ENCODE measurements at regions of chr22 and their contacts with region 1.

Region 1: GRCh38 chr22:42680648-42681047 is 31.5 kb upstream of the CYB5R3 start:
- DNase-seq: no peak
- ATAC-seq: peak in 3 of 8 donors; percentile 10 to 78 (median 40)
- H3K4me3 ChIP-seq: no peak overlapping the region
- H3K27ac ChIP-seq: peak overlapping the region in 6 of 10 donors; percentile 15 to 92 (median 52)
- H3K4me1 ChIP-seq: peaks cover 47 to 98% (median 91%) of the 10 kb centered on the region in 9 donors
- H3K27me3 ChIP-seq: no peaks in the 10 kb centered on the region
- CTCF ChIP-seq: no peak

Region 2: DNA sequence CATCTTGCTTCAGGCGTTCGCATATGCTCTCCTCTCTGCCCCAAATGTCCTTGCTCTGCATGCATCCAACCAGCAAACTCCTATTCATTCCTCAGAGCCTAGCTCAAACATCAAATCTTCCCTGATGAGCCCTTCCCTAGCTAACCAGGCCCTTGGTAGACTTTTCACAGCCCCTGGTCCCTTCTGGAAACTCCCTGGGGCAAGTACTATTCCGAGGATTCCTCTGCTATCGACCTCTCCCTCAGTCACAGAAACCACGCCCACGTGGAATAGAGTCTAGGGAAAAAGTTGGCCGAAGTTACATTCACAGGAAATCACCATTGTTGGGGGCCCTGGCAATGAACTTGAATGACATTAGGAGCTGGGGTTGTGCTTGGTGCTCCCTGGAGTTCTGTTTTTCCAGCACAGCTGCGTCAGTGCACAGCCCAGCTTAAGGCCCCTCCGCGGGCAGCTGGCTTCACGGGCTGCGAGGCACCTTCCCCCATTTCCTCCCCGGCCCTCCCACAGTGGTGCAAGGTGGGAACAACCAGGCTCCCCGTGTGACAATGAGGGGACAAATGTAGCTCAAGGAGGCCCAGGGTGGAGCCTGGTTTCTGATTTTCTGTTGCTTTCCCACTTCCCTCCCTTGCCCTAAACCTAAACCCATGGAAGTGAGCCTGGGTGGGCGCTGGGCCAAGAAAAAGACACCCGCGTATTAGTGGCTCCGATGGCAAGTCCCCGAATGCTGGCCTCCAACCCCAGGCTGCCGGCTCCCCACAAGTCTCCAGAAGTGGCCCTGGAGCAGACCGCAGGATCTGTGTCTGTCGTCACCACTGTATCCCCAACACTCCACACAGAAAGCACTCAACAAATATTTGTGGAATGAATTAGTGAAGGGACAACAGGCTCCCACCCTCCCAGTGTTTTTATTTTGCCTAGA is 36.0 kb before region 1 on chr22:
- intact Hi-C with region 1: no loop called
- DNase-seq: peak; percentile 69 to 80
- ATAC-seq: peak in 6 of 8 donors; percentile 9 to 52 (median 29)
- H3K4me3 ChIP-seq: peak overlapping the region in 9 of 10 donors; percentile 33 to 99 (median 50)
- H3K27ac ChIP-seq: peak overlapping the region; percentile 77 to 99 (median 96)
- H3K4me1 ChIP-seq: peaks cover 49 to 87% (median 80%) of the 10 kb centered on the region in 9 donors
- H3K27me3 ChIP-seq: no peaks in the 10 kb centered on the region
- CTCF ChIP-seq: no peak

Region 3: GRCh38 chr22:42743501-42743991 is 62.9 kb after region 1 on chr22:
- intact Hi-C with region 1: loop called in 1 of 10 experiments (anchors 5 kb)
- DNase-seq: peak; percentile 91 to 93
- ATAC-seq: peak; percentile 89 to 94 (median 92)
- H3K4me3 ChIP-seq: peak overlapping the region in 1 of 10 donors; percentile 10
- H3K27ac ChIP-seq: peak overlapping the region; percentile 67 to 96 (median 82)
- H3K4me1 ChIP-seq: peaks cover 13 to 49% (median 31%) of the 10 kb centered on the region in 9 donors
- H3K27me3 ChIP-seq: no peaks in the 10 kb centered on the region
- CTCF ChIP-seq: peak in 7 of 9 donors; percentile 3 to 42 (median 18)

Region 4: GRCh38 chr22:42906605-42907348 is 226.1 kb after region 1 on chr22:
- intact Hi-C with region 1: no loop called
- DNase-seq: peak; percentile 75 to 82
- ATAC-seq: peak; percentile 68 to 79 (median 74)
- H3K4me3 ChIP-seq: no peak overlapping the region
- H3K27ac ChIP-seq: peak overlapping the region; percentile 58 to 86 (median 74)
- H3K4me1 ChIP-seq: peaks cover 55 to 100% (median 88%) of the 10 kb centered on the region in 9 donors
- H3K27me3 ChIP-seq: no peaks in the 10 kb centered on the region
- CTCF ChIP-seq: no peak

Measured in heart right ventricle (tissue), 16 donors.